Right lobe of liver (tissue), 6 donors: ENCODE measurements at regions of chr1 and their contacts with region 1.

Region 1: DNA sequence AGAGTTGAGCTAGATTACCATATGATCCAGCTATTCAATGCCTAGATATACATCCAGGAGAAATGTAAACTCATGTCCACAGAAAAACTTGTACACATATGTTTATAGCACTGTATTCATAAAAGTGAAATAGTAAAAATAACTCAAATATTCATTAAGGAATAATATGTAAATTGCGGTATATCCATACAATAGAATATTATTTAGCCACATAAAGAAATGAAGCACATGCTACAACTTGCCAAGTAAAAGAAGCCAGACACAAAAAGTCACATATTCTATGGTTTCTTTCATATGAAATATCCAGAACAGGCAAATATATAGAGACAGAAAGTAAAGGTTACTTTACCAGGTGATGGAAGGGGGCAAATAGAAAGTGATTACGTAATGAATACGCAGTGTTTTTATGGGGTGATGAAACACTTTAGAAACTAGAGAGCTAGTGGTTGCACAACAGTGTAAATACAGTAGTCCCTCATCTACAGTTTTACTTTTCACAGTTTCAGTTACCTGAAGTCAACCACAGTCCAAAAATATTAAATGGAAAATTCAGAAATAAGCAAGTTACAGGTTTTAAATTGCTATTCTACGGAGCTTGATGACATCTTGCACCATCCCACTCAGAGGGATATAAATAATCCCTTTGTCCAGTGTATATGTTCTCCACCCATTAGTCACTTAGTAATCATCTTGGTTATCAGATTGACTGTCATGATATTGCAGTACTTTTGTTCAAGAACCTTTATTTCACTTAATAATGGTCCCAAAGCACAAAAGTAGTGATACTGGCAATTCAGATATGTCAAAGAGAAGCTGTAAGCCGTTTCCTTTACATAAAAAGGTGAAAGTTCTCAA is 62.3 kb downstream of the ZNF644 start:
- DNase-seq: no peak
- ATAC-seq: peak; percentile 79 to 89 (median 88)
- H3K4me3 ChIP-seq: no peak overlapping the region
- H3K27ac ChIP-seq: peak overlapping the region in 2 of 3 donors; percentile 43 to 59
- H3K4me1 ChIP-seq: peaks cover 0 to 7% (median 2%) of the 10 kb centered on the region in 4 donors
- H3K27me3 ChIP-seq: no peaks in the 10 kb centered on the region
- CTCF ChIP-seq: no peak
- POLR2A ChIP-seq: no peak

Region 2: DNA sequence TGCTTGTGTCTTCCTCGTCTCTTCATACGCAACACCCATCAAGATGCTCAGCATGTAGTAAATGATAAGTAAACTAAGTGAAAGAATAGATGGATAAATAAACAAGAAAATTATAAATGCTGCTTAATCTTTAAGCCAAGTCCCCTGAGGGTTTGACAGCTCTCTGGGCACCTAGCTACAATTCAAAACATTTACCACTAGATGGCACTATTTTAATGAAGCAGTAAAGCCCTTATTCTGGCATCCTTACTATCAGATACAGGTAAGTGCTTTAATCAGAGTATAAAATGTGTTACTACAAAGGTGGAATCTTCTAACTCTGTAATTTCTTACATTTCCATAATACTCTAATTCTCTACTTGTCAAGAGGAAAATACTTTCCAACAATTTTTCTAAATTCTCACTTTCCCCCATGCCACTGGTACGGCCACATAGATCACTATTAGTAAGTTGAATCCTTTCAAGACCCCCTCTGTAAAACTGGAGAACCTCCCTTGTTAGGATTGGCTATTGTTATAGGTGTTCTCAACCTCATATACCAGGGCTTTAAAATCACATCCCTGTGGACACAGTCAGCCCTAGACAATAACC is 380.3 kb before region 1 on chr1:
- intact Hi-C with region 1: loop called in 1 of 2 experiments (anchors 10 kb)
- DNase-seq: no peak
- ATAC-seq: peak; percentile 78 to 86 (median 80)
- H3K4me3 ChIP-seq: no peak overlapping the region
- H3K27ac ChIP-seq: no peak overlapping the region
- H3K4me1 ChIP-seq: no peaks in the 10 kb centered on the region
- H3K27me3 ChIP-seq: no peaks in the 10 kb centered on the region
- CTCF ChIP-seq: peak; percentile 56 to 79 (median 78)
- POLR2A ChIP-seq: no peak

Region 3: DNA sequence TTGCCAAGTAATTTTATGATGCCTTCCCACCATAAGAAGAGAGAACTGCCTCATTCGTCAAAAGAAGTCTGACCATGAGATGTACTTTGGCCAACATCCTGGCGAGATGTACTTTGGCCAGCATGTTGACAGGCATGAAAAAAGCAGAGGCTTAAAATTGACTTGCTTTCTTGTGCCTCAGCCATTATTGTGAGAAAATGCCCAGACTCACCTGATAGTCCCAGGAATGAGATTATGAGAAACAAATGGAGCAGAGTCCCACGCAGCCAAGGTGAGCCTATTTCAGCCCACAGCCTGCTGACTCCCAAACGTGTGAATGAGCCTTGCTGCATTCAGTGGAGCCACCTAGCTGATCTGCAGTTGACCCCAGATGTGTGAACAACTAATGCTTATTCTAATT is 105.8 kb after region 1 on chr1:
- intact Hi-C with region 1: no loop called
- DNase-seq: peak in 1 of 3 donors; percentile 59
- ATAC-seq: peak; percentile 67 to 87 (median 82)
- H3K4me3 ChIP-seq: no peak overlapping the region
- H3K27ac ChIP-seq: peak overlapping the region in 1 of 3 donors; percentile 35
- H3K4me1 ChIP-seq: peaks cover 0 to 8% (median 0%) of the 10 kb centered on the region in 4 donors
- H3K27me3 ChIP-seq: no peaks in the 10 kb centered on the region
- CTCF ChIP-seq: peak in 1 of 4 donors; percentile 12
- POLR2A ChIP-seq: no peak

Region 4: GRCh38 chr1:91080650-91081049 is 121.1 kb after region 1 on chr1:
- intact Hi-C with region 1: no loop called
- DNase-seq: no peak
- ATAC-seq: no peak
- H3K4me3 ChIP-seq: no peak overlapping the region
- H3K27ac ChIP-seq: no peak overlapping the region
- H3K4me1 ChIP-seq: no peaks in the 10 kb centered on the region
- H3K27me3 ChIP-seq: no peaks in the 10 kb centered on the region
- CTCF ChIP-seq: no peak
- POLR2A ChIP-seq: no peak